Posterior cingulate gyrus (tissue), 11 donors: ENCODE measurements at regions of chr17 and their contacts with region 1.

Region 1: DNA sequence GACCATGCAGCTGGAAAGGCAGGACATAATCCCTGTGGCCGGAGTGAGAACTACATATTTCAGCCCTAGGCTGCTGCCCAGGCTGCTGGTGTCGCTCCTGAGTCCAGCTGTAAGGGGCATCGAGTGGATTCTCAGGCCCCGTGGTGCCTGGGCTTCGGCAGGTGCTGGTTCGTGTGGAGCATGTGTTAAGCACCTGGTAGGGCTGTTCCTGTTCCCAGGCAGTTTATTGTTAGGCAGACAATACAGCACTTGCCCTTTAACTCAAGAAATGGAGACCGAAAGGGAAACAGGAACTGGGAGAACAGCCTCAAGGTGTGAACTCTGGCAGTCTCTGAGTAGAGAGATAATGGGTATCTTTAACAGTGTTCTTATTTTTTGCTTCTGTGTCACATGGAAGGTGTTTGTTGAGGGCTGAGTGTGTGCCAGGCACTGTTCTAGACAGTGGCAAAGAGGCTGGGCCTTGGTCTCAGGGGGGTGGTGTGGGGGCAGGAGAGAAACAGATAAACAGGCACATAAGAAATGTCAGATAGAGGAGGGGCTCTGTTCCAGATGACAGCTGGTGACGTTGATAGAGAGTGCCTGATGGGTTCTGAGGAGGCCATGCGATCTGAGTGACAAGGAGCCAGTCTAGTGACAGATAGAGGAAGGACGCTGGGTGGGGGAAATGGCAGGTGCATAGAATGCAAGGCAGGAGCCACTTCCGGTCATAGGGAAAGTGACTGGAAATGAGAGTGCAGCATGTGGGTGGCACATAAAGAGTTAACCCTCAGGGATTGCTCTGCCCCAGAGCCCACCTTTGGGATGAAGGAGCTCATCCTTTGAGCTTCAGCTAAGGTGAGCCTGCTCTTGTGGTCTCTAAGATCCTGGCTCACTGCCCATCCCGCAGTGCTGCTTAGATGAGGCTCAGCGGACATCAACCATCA is 33.8 kb downstream of the EPN2 start:
- DNase-seq: peak in 1 of 10 donors; percentile 74

Region 2: GRCh38 chr17:19306160-19307111 is 35.5 kb after region 1 on chr17:
- intact Hi-C with region 1: loop called (anchors 5 kb)
- DNase-seq: peak; percentile 68 to 98 (median 86)

Region 3: DNA sequence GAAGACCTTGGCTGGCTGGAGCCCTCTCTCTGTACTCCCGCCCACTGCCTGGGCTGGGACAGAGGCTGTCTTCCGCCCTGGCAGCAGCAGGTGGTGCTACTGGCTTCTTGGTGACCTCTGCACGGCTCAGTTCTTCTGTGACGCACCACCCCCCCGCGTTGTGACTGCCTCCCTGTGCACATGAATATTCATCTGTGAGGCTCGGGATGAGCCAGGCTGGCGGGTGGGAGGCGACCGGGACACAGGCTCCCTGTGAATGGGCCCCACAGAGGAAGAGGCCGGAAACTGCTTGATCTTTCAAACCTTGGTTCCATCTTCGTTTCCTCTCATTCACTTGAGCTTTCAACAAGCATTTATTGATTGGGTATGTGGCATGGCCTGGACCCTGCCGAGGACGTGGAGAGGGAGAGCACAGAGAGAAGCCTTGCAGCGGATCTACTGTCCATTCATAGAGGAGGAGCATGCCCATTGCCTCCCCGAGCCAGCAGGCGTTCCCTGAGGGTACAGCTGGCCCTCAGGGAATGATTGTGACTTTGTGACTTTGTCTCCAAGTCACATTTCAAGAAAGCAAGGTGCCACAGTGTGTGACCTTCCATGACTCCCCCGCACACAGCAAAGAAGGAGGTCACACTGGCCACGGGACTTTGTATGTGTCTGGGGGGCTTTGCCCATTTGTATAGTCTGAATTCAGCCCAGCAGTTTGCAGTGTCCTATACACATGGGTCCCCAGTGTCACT is 46.6 kb after region 1 on chr17:
- intact Hi-C with region 1: no loop called
- DNase-seq: peak; percentile 88 to 99 (median 92)

Region 4: GRCh38 chr17:19338031-19338990 is 67.4 kb after region 1 on chr17:
- intact Hi-C with region 1: no loop called
- DNase-seq: peak in 5 of 10 donors; percentile 50 to 92 (median 58)